ENCODE measurements at regions of chr15 and their contacts with region 1.

Region 1: DNA sequence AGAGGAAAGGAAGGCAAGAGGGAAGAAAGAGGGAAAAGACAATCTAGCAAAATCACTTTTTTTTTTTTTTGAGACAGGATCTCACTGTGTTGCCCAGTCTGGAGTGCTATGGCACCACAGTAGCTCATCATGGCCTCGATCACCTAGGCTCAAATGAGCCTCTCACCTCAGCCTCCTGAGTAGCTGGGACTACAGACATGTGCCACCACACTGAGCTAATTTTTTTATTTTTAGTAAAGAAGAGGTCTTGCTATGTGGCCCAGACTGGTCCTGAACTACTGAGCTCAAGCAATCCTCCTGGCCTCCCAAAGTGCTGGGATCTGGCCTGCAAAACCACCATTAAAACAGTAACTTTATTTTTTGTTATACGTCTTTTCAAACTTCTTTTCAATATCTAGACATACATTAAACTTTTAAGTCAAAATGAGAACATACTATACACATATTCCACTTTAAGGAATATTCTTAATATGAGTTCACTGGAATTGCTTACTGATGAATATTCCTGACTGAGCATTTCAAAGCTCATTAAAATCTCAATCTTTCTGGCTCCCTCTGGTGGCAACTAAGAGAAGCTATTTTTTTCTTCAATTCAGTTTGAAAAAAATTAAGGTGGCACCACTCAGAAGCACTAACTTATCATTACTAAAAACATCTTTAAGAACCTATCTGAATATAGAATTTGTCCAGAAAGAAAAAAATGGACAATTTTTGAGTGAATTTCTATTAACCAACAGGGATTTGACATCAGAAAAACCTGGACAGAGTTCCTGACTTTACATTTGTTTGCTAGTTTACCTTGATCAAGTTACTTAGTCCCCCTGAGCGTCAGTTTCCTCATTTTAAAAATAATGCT is 40.9 kb downstream of the UACA start:
- DNase-seq: no peak
- H3K4me3 ChIP-seq: no peak overlapping the region
- H3K27ac ChIP-seq: no peak overlapping the region
- H3K4me1 ChIP-seq: no peaks in the 10 kb centered on the region
- H3K27me3 ChIP-seq: no peaks in the 10 kb centered on the region
- CTCF ChIP-seq: peak; percentile 74 to 77

Region 2: GRCh38 chr15:70569091-70569621 is 153.3 kb before region 1 on chr15:
- CTCF ChIA-PET with region 1: interaction called, 8 read pairs
- dilution Hi-C with region 1: no loop called
- in situ Hi-C with region 1: no loop called
- intact Hi-C with region 1: loop called (anchors 10 kb)
- DNase-seq: peak; percentile 54
- H3K4me3 ChIP-seq: no peak overlapping the region
- H3K27ac ChIP-seq: no peak overlapping the region
- H3K4me1 ChIP-seq: peaks cover 13% of the 10 kb centered on the region
- H3K27me3 ChIP-seq: no peaks in the 10 kb centered on the region
- CTCF ChIP-seq: peak; percentile 48 to 68

Region 3: GRCh38 chr15:70582143-70582945 is 140.2 kb before region 1 on chr15:
- CTCF ChIA-PET with region 1: no interaction called
- dilution Hi-C with region 1: no loop called
- in situ Hi-C with region 1: no loop called
- intact Hi-C with region 1: no loop called
- DNase-seq: no peak
- H3K4me3 ChIP-seq: no peak overlapping the region
- H3K27ac ChIP-seq: no peak overlapping the region
- H3K4me1 ChIP-seq: peaks cover 10% of the 10 kb centered on the region
- H3K27me3 ChIP-seq: peaks cover 3% of the 10 kb centered on the region
- CTCF ChIP-seq: no peak

Region 4: GRCh38 chr15:70679919-70680231 is 42.6 kb before region 1 on chr15:
- CTCF ChIA-PET with region 1: interaction called, 8 read pairs
- dilution Hi-C with region 1: no loop called
- in situ Hi-C with region 1: no loop called
- intact Hi-C with region 1: loop called (anchors 1 kb)
- DNase-seq: no peak
- H3K4me3 ChIP-seq: no peak overlapping the region
- H3K27ac ChIP-seq: no peak overlapping the region
- H3K4me1 ChIP-seq: no peaks in the 10 kb centered on the region
- H3K27me3 ChIP-seq: no peaks in the 10 kb centered on the region
- CTCF ChIP-seq: no peak

Region 5: GRCh38 chr15:70752193-70752635 is 29.7 kb after region 1 on chr15:
- CTCF ChIA-PET with region 1: interaction called, 10 read pairs
- dilution Hi-C with region 1: no loop called
- in situ Hi-C with region 1: no loop called
- intact Hi-C with region 1: no loop called
- DNase-seq: no peak
- H3K4me3 ChIP-seq: no peak overlapping the region
- H3K27ac ChIP-seq: no peak overlapping the region
- H3K4me1 ChIP-seq: peaks cover 3% of the 10 kb centered on the region
- H3K27me3 ChIP-seq: no peaks in the 10 kb centered on the region
- CTCF ChIP-seq: no peak